ENCODE measurements at regions of chr9 and their contacts with region 1.

Region 1: GRCh38 chr9:111975709-111976108 is 79.1 kb downstream of the UGCG start:
- DNase-seq: peak in 4 of 5 donors; percentile 22 to 66 (median 50)
- ATAC-seq: peak; percentile 58 to 80 (median 64)
- H3K4me3 ChIP-seq: no peak overlapping the region
- H3K27ac ChIP-seq: no peak overlapping the region
- H3K4me1 ChIP-seq: peaks cover 0 to 17% (median 0%) of the 10 kb centered on the region in 12 donors
- H3K27me3 ChIP-seq: no peaks in the 10 kb centered on the region
- CTCF ChIP-seq: peak in 3 of 12 donors; percentile 10 to 21 (median 12)
- POLR2A ChIP-seq: no peak

Region 2: DNA sequence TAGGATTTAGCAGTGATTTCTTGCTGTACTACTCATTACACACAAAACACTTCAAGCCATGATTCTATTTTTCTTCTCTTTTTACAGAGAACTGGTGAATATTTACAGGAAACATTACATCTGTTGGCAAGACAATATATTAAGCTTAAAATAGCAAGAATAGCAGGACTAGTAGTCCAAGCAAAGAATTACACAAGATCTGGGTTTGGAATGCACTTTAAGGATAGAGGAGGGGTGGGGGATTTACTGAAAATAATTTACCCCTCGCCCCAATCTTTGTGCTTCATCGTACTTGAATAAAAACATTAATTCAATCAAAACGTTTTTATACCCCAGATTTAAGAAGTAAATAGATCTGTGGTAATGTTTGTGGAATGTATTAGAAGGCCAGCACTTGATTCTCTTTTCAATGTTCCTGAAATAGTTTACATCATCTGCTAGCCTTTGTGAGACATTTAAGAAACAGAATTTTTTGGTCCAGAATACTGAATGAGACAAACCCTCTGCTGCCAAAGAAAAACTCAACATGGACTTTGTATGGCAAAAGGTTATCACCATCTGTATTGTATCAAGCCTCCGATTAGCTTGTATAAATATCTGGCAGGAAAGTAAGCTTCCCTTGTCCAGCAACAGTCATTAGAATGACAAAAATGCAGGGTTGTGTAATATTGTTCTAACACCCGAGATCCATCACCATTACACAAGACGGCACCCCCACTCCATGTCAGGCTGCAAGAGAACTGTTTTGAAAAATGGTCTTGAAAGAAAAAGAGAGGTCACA is 1420.0 kb before region 1 on chr9:
- intact Hi-C with region 1: no loop called
- DNase-seq: peak in 4 of 5 donors; percentile 12 to 71 (median 35)
- ATAC-seq: peak; percentile 76 to 93 (median 90)
- H3K4me3 ChIP-seq: no peak overlapping the region
- H3K27ac ChIP-seq: peak overlapping the region in 11 of 12 donors; percentile 8 to 76 (median 48)
- H3K4me1 ChIP-seq: peaks cover 0 to 37% (median 2%) of the 10 kb centered on the region in 12 donors
- H3K27me3 ChIP-seq: no peaks in the 10 kb centered on the region
- CTCF ChIP-seq: no peak
- POLR2A ChIP-seq: no peak

Region 3: DNA sequence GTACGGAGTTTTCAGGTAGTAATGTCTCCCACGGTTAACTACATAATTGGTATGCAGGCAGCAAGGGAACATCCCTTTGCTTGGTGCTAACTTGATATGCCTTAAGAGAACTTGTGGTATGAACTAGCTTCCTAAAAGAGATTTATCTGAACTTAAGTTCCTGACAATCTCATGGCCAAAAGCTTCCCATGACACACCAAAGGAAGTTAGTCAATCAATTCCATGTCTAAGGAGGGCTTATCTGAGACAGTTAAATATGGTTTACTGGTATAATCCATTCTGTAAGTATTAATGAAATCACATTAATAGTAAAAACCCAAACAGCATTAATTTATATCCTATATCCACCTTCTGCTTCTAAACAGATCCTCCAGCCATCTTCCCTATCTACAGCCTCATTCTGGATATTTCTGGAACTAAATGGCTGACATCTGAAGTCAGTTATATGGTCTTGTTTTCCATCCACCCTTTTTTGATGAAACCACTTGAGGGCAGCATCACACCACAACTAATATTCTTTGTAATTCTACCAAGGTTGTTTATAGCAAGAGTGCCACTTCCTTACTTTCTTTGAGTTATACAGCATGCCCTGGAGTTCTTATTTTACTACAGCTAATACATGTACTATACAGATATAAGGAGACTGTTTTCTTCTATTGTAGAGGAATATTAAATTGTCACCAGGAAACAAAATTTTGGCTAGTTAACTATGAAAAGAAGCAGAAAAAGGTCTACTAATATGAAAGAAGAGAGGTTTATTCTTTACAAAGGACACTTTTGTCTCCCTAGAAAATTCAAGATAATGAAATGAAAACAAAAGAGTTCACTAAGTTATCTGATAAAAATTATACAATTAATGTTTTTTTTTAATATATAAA is 215.7 kb before region 1 on chr9:
- intact Hi-C with region 1: loop called in 1 of 10 experiments (anchors 5 kb)
- DNase-seq: peak in 2 of 5 donors; percentile 48 to 50
- ATAC-seq: peak in 3 of 4 donors; percentile 88 to 91 (median 90)
- H3K4me3 ChIP-seq: no peak overlapping the region
- H3K27ac ChIP-seq: peak overlapping the region in 1 of 12 donors; percentile 39
- H3K4me1 ChIP-seq: peaks cover 0 to 8% (median 0%) of the 10 kb centered on the region in 12 donors
- H3K27me3 ChIP-seq: no peaks in the 10 kb centered on the region
- CTCF ChIP-seq: peak; percentile 53 to 81 (median 72)
- POLR2A ChIP-seq: no peak

Region 4: DNA sequence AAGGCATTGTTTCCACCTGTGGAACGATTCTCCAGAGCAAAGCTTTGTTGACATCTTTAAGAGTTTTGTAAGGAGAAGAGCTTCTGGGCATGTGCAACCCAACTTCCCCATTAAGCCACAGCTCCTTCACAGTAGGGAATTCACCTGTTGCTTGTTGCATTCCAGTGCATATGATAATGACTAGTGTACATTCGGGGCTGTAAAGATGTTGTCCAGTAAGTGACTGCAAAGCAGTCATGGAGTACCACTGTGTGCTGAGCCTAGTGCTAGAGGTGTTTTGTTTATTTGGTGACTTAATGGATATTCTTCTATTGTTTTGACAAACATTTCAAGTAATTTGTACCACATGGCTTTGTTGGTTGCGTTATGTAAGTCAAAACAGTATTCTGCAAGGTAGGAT is 66.3 kb before region 1 on chr9:
- intact Hi-C with region 1: loop called in 1 of 10 experiments (anchors 10 kb)
- DNase-seq: no peak
- ATAC-seq: peak in 2 of 4 donors; percentile 23 to 38
- H3K4me3 ChIP-seq: no peak overlapping the region
- H3K27ac ChIP-seq: no peak overlapping the region
- H3K4me1 ChIP-seq: peaks cover 0 to 90% (median 21%) of the 10 kb centered on the region in 12 donors
- H3K27me3 ChIP-seq: no peaks in the 10 kb centered on the region
- CTCF ChIP-seq: no peak
- POLR2A ChIP-seq: no peak

Region 5: DNA sequence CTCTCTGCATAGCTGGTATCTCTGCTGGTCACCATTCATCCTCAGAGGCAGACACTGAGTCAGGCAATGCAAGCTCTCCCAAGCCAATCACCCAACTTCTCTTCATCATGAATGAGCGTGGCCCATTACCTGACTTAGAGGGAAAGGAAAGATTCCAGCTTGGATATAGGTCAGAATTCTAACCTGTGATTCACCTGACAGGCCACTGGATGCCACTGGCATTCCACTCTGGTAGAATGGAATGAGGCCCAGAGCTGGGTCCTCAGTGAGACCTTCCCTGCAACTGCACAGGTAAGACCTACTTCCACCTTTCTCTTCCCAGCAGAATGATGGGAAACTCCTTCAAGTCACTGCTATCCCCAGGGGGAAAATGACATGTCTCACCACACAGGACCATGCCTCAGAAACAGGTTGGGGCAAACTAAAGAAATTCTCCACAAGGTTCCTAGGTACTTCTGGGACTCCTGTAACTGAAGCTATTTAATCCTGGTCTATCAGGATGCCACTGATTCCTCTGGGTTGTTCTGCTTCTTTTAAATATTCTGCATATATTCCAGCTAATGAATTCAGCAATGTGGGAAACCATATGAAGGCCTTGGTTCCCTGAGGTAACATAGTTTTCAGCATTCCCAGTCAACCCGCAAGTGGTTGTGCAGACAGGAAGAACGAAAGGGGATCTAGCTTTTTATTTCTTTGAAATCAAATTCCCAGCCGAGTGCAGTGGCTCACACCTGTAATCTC is 137.4 kb after region 1 on chr9:
- intact Hi-C with region 1: no loop called
- DNase-seq: no peak
- ATAC-seq: peak in 1 of 4 donors; percentile 38
- H3K4me3 ChIP-seq: no peak overlapping the region
- H3K27ac ChIP-seq: no peak overlapping the region
- H3K4me1 ChIP-seq: peaks cover 0 to 14% (median 0%) of the 10 kb centered on the region in 12 donors
- H3K27me3 ChIP-seq: no peaks in the 10 kb centered on the region
- CTCF ChIP-seq: peak in 8 of 12 donors; percentile 11 to 46 (median 31)
- POLR2A ChIP-seq: no peak